MCF 10A (cell line): ENCODE measurements at regions of chr5 and their contacts with region 1.

Region 1: DNA sequence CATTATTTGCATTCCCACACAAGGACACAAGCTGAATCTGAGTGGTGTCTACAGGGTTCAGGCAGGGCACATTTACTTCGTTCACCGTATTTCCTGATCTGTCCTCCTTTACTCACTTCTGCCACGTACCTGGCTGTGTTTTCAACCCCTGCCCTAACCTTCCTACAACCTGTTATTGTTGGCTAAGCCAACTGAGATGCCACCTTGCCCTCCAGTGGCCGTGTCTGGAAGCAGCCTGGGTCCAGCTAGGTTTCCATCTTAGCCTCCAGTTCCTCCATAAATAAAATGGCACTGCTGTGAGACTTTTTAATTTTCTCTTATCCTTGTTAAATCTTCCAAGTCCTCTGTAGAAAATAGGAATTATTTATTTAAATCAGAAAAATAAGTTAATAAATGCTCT is 64.8 kb downstream of the ATP10B start:
- DNase-seq: peak; percentile 57
- H3K4me3 Mint-ChIP-seq: no peak overlapping the region
- H3K27ac Mint-ChIP-seq: no peak overlapping the region
- H3K4me1 Mint-ChIP-seq: peaks cover 6% of the 10 kb centered on the region
- H3K27me3 Mint-ChIP-seq: no peaks in the 10 kb centered on the region
- CTCF ChIP-seq: peak; percentile 38

Region 2: DNA sequence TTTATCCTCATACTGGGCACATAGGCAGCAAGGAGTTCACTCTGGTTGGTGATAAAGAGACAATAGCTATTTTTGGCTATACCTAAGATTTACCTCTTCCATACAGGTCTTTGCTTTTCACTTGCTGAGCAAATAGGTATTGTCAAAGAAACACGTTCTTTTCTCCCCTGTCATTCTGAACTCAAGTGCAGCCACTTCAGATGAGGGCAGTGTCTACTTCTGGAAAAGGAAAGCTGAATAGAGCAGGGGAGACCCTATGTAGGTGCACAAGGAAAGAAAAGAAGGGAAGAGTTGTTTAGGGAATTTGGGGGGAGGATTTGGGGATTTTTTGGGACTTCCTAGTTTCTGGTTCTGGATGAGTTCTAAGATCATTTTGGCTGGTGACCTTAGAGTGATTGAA is 44.8 kb before region 1 on chr5:
- CTCF ChIA-PET with region 1: no interaction called
- POLR2A ChIA-PET with region 1: no interaction called
- intact Hi-C with region 1: no loop called
- DNase-seq: no peak
- H3K4me3 Mint-ChIP-seq: no peak overlapping the region
- H3K27ac Mint-ChIP-seq: no peak overlapping the region
- H3K4me1 Mint-ChIP-seq: no peaks in the 10 kb centered on the region
- H3K27me3 Mint-ChIP-seq: peaks cover 3% of the 10 kb centered on the region
- CTCF ChIP-seq: no peak

Region 3: GRCh38 chr5:160774666-160775315 is 12.4 kb before region 1 on chr5:
- CTCF ChIA-PET with region 1: interaction called, 13 read pairs
- POLR2A ChIA-PET with region 1: no interaction called
- intact Hi-C with region 1: no loop called
- DNase-seq: no peak
- H3K4me3 Mint-ChIP-seq: no peak overlapping the region
- H3K27ac Mint-ChIP-seq: no peak overlapping the region
- H3K4me1 Mint-ChIP-seq: no peaks in the 10 kb centered on the region
- H3K27me3 Mint-ChIP-seq: no peaks in the 10 kb centered on the region
- CTCF ChIP-seq: no peak